T-cell (primary cell): ENCODE measurements at regions of chr11 and their contacts with region 1.

Region 1: DNA sequence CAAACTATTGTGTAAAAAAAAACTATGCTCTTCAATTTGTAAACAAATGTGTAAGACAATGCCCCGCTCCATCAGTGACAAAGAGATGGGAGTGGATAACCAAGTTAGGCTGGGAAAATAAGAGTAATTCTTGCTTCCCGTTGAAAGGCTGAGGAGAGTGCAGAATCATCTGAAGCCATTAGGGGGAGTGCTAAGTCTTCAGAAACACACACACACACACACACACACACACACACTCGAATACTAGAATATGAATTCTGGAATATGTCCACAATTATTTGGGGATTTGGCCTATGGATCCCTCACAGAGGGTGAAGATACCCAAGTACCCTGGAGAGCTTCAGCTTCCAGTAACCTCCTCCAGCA is 27.8 kb upstream of the ROBO3 start:
- DNase-seq: peak in 1 of 35 experiments; percentile 32
- ATAC-seq: peak in 1 of 4 experiments; percentile 47
- H3K4me3 ChIP-seq: no peak overlapping the region
- H3K4me3 Mint-ChIP-seq: peak overlapping the region in 1 of 3 donors; percentile 78
- H3K27ac ChIP-seq: no peak overlapping the region
- H3K27ac Mint-ChIP-seq: no peak overlapping the region
- H3K4me1 ChIP-seq: peaks cover 2 to 17% of the 10 kb centered on the region in 2 experiments
- H3K4me1 Mint-ChIP-seq: peaks cover 19 to 23% (median 21%) of the 10 kb centered on the region in 3 donors
- H3K27me3 ChIP-seq: peaks cover 23 to 44% of the 10 kb centered on the region in 2 experiments
- H3K27me3 Mint-ChIP-seq: peaks cover 49 to 71% of the 10 kb centered on the region in 2 donors

Region 2: DNA sequence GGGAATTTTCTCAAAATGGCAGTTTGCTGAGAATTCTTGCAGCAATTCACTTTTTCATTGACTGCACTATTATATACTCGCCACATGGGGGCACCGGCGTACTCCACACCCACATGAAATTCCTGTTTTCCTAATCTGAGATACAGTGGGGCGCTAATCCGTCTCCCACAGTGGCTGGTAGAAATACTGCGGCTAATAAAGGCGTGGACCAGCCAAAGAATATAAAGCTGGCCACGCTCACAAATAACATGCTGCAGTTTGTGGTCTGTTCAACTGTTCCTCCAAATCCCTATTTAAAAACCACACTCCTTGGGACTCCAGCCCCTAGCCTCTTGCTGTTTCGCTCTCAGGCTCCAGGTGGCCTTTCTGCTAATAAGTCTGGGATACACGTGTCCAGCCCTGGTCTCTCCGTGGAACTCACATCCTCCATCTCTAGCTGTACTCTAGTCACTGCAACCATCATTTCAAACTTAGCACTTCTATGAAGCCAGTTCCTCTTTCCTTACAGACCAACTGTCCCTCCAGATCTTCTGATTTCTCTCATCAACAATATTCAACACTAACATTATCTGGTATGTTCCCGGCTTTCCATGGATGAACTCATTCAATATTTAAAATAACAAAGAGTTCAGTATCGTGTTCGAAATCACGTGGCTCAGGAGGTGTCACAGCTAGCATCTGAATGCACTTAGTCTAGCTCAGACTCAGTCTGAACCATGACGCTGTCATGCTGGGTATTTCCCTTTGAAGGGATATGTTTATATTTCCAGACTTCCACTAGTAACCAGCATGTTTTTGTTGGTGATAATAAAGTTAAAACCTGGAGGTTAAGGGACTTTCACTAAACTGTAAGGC is 192.8 kb before region 1 on chr11:
- CTCF ChIA-PET with region 1: interaction called, 4 to 15 read pairs
- POLR2A ChIA-PET with region 1: no interaction called
- DNase-seq: peak in 17 of 35 experiments; percentile 1 to 64 (median 8)
- ATAC-seq: peak; percentile 53 to 77 (median 66)
- H3K4me3 ChIP-seq: no peak overlapping the region
- H3K4me3 Mint-ChIP-seq: no peak overlapping the region
- H3K27ac ChIP-seq: no peak overlapping the region
- H3K27ac Mint-ChIP-seq: no peak overlapping the region
- H3K4me1 ChIP-seq: peaks cover 0 to 3% of the 10 kb centered on the region in 2 experiments
- H3K4me1 Mint-ChIP-seq: peaks cover 0 to 4% (median 3%) of the 10 kb centered on the region in 3 donors
- H3K27me3 ChIP-seq: no peaks in the 10 kb centered on the region
- H3K27me3 Mint-ChIP-seq: no peaks in the 10 kb centered on the region

Region 3: GRCh38 chr11:124800226-124800929 is 37.1 kb before region 1 on chr11 and contains the start of gene MSANTD2:
- CTCF ChIA-PET with region 1: interaction called, 11 to 18 read pairs
- POLR2A ChIA-PET with region 1: no interaction called
- DNase-seq: peak; percentile 38 to 85 (median 67)
- ATAC-seq: peak; percentile 89 to 92 (median 90)
- H3K4me3 ChIP-seq: peak within 1 kb of the TSS; percentile 52 to 94
- H3K4me3 Mint-ChIP-seq: peak within 1 kb of the TSS; percentile 87 to 94 (median 93)
- H3K27ac ChIP-seq: peak within 1 kb of the TSS; percentile 98
- H3K27ac Mint-ChIP-seq: peak within 1 kb of the TSS; percentile 91 to 92
- H3K4me1 ChIP-seq: peaks cover 11% of the 10 kb centered on the region in 2 experiments
- H3K4me1 Mint-ChIP-seq: peaks cover 18 to 32% (median 31%) of the 10 kb centered on the region in 3 donors
- H3K27me3 ChIP-seq: no peaks in the 10 kb centered on the region
- H3K27me3 Mint-ChIP-seq: no peaks in the 10 kb centered on the region
- total RNA-seq, gene MSANTD2: 10.1 to 25.2 (median 19.9) TPM

Region 4: GRCh38 chr11:124855437-124855836 is 18.0 kb after region 1 on chr11:
- CTCF ChIA-PET with region 1: no interaction called
- POLR2A ChIA-PET with region 1: no interaction called
- DNase-seq: no peak
- ATAC-seq: no peak
- H3K4me3 ChIP-seq: no peak overlapping the region
- H3K4me3 Mint-ChIP-seq: no peak overlapping the region
- H3K27ac ChIP-seq: no peak overlapping the region
- H3K27ac Mint-ChIP-seq: no peak overlapping the region
- H3K4me1 ChIP-seq: no peaks in the 10 kb centered on the region
- H3K4me1 Mint-ChIP-seq: no peaks in the 10 kb centered on the region
- H3K27me3 ChIP-seq: peaks cover 3 to 20% of the 10 kb centered on the region in 2 experiments
- H3K27me3 Mint-ChIP-seq: peaks cover 11 to 14% of the 10 kb centered on the region in 2 donors

Region 5: GRCh38 chr11:124875943-124876817 is 38.7 kb after region 1 on chr11:
- CTCF ChIA-PET with region 1: interaction called in 1 of 2 experiments, 16 read pairs
- POLR2A ChIA-PET with region 1: no interaction called
- DNase-seq: peak; percentile 54 to 87 (median 70)
- ATAC-seq: peak; percentile 93 to 96 (median 94)
- H3K4me3 ChIP-seq: peak overlapping the region; percentile 64 to 81
- H3K4me3 Mint-ChIP-seq: peak overlapping the region; percentile 83 to 84 (median 83)
- H3K27ac ChIP-seq: peak overlapping the region; percentile 68
- H3K27ac Mint-ChIP-seq: peak overlapping the region in 1 of 2 donors; percentile 72
- H3K4me1 ChIP-seq: peaks cover 0 to 24% of the 10 kb centered on the region in 2 experiments
- H3K4me1 Mint-ChIP-seq: peaks cover 21 to 26% (median 23%) of the 10 kb centered on the region in 3 donors
- H3K27me3 ChIP-seq: peaks cover 0 to 53% of the 10 kb centered on the region in 2 experiments
- H3K27me3 Mint-ChIP-seq: peaks cover 30 to 35% of the 10 kb centered on the region in 2 donors

Region 6: DNA sequence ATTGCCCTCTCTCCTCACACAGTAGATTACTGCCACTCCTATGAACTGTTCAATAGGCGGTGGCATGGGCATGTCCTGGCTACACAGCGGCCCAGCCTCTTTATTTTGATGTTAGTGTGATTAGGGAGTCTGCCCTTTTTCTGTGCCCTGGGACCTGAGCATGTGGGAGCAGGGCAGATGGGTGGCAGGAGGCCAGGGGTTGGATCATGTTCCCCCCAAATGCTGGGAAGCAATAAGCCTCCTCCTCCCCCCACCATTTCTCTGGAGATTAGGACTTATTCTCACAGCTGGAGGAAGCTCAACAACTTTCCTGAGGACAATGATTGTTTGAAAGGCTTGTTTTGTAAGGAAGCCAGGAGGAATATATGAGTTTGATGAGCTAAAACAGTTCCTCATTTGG is 82.4 kb after region 1 on chr11:
- CTCF ChIA-PET with region 1: interaction called in 1 of 2 experiments, 12 read pairs
- POLR2A ChIA-PET with region 1: no interaction called
- DNase-seq: no peak
- ATAC-seq: no peak
- H3K4me3 ChIP-seq: no peak overlapping the region
- H3K4me3 Mint-ChIP-seq: peak overlapping the region in 1 of 3 donors; percentile 65
- H3K27ac ChIP-seq: no peak overlapping the region
- H3K27ac Mint-ChIP-seq: no peak overlapping the region
- H3K4me1 ChIP-seq: peaks cover 14 to 37% of the 10 kb centered on the region in 2 experiments
- H3K4me1 Mint-ChIP-seq: peaks cover 24 to 28% (median 25%) of the 10 kb centered on the region in 3 donors
- H3K27me3 ChIP-seq: peaks cover 0 to 7% of the 10 kb centered on the region in 2 experiments
- H3K27me3 Mint-ChIP-seq: peaks cover 3% of the 10 kb centered on the region in 2 donors